Activated CD8-positive, alpha-beta T cell treated with anti-CD3 and anti-CD28 coated beads for 36 hours (primary cell): ENCODE measurements at regions of chr11 and their contacts with region 1.

Region 1: DNA sequence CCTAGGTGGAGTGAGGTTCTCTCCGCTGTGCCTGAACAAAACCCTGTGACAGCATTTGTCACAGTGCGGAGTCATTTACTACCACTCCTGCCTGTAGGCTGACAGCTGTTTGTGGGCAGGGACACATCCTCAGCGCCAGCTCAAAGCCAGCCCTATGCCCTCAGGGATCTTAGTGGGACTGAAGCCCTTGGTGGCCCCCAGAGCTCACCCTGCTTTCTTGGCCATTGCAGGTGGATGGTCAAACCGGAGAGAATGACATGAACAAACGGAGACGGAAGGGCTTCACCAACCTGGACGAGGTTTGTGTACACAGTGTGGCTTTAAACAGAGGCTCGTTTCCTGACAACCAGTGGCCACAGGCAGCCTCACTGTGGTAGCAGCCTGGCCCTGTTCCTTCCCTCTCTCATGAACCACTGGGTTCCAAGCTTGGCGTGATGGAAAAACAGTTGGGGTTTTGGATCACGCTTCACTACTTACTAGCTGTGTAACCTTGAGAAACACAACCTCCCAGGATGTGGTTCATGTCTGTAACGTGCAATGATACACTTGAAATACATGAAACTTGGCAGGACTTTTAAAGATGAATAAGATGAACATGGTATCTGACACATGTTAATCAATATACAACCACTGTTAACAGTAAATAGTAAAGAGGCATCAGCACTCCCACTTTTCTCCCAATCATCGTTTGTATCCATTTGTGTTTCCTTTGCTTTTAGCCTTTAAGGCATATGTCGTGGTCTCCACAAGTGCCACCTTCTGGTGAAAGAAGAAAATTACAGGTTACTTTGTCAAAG is 125.8 kb downstream of the MICAL2 start:
- DNase-seq: peak; percentile 86
- ATAC-seq: peak; percentile 86
- H3K4me3 Mint-ChIP-seq: peak overlapping the region; percentile 36
- H3K27ac Mint-ChIP-seq: peak overlapping the region; percentile 92
- H3K4me1 Mint-ChIP-seq: peaks cover 30% of the 10 kb centered on the region
- H3K27me3 Mint-ChIP-seq: no peaks in the 10 kb centered on the region
- CTCF ChIP-seq: peak; percentile 91

Region 2: DNA sequence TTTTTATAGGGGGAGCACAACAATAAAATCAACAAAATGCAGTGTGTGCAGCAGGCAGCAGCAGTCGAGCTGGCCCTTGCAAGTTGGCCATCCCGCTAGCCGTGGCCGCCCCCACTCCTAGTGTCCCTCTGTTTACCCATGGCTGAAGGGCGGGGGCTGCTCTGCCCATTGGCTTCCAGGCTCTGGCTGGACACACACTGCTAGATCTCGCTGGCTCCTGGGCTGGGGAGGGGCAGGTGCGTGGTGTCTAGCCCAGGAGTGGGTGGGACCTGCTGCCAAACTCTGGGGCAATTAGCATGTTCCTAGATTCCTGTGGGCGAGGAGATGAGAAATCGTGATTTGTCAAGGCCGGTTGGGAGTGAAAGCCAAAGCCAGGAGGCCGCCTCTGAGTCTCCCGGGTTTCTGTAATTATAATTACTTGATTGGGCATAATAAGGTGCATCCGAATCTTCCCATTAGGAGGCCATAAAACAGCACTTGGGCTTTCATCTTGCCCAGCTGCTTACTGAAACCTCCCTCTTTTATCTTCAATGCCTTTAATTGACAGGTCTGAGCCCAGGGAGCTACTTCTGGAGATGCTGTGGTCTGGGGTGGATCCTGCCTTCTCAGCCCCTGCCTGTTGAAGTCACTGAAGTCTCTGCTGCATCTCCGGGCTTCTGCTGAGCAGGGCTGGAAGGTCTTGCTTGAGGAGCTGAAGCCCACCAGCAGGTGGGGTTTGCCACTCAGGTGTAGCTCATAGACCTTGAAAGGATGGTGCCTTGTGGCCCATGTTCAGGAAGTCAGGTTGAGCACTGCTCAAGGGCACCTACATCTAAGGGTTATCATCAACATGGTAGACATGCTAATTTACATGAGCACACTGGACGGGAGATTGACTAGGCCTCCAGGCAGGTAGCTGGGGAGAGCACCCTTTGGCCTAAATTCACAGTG is 183.2 kb before region 1 on chr11:
- CTCF ChIA-PET with region 1: interaction called, 51 read pairs
- POLR2A ChIA-PET with region 1: no interaction called
- intact Hi-C with region 1: loop called (anchors 5 kb)
- DNase-seq: peak; percentile 58
- ATAC-seq: peak; percentile 71
- H3K4me3 Mint-ChIP-seq: no peak overlapping the region
- H3K27ac Mint-ChIP-seq: no peak overlapping the region
- H3K4me1 Mint-ChIP-seq: no peaks in the 10 kb centered on the region
- H3K27me3 Mint-ChIP-seq: no peaks in the 10 kb centered on the region
- CTCF ChIP-seq: no peak

Region 3: GRCh38 chr11:12102588-12103410 is 133.3 kb before region 1 on chr11:
- CTCF ChIA-PET with region 1: interaction called, 13 read pairs
- POLR2A ChIA-PET with region 1: no interaction called
- intact Hi-C with region 1: no loop called
- DNase-seq: no peak
- ATAC-seq: no peak
- H3K4me3 Mint-ChIP-seq: no peak overlapping the region
- H3K27ac Mint-ChIP-seq: no peak overlapping the region
- H3K4me1 Mint-ChIP-seq: peaks cover 6% of the 10 kb centered on the region
- H3K27me3 Mint-ChIP-seq: no peaks in the 10 kb centered on the region
- CTCF ChIP-seq: no peak

Region 4: DNA sequence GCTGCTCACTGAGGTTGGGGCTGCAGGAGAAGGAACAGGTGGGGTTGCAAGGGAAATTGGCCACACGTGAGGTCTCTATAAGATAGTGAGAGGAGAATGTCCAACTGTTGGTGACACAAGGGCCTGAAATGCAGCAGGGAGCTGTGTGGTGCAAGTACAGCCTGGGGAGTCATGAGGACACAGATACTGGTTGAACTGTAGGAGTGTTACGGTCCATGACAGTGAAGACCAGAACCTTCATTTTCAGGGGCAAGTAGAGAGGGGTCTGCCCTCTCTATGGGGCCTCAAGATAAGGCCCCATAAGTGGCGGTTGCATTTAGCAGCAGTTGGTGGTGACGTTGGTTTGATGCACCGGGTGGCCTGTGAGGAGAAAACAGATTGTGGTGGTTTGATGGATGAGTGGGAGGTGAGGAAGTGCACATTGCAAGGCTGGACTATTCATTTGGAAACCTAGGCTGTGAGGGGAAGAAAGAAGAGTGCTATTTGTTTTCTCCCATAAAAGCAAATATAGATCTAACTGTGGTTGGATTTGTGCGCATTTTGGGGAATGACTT is 86.4 kb before region 1 on chr11:
- CTCF ChIA-PET with region 1: interaction called, 11 read pairs
- POLR2A ChIA-PET with region 1: interaction called, 8 read pairs
- intact Hi-C with region 1: loop called (anchors 5 kb)
- DNase-seq: peak; percentile 85
- ATAC-seq: peak; percentile 56
- H3K4me3 Mint-ChIP-seq: peak overlapping the region; percentile 9
- H3K27ac Mint-ChIP-seq: peak overlapping the region; percentile 94
- H3K4me1 Mint-ChIP-seq: peaks cover 60% of the 10 kb centered on the region
- H3K27me3 Mint-ChIP-seq: no peaks in the 10 kb centered on the region
- CTCF ChIP-seq: no peak

Region 5: DNA sequence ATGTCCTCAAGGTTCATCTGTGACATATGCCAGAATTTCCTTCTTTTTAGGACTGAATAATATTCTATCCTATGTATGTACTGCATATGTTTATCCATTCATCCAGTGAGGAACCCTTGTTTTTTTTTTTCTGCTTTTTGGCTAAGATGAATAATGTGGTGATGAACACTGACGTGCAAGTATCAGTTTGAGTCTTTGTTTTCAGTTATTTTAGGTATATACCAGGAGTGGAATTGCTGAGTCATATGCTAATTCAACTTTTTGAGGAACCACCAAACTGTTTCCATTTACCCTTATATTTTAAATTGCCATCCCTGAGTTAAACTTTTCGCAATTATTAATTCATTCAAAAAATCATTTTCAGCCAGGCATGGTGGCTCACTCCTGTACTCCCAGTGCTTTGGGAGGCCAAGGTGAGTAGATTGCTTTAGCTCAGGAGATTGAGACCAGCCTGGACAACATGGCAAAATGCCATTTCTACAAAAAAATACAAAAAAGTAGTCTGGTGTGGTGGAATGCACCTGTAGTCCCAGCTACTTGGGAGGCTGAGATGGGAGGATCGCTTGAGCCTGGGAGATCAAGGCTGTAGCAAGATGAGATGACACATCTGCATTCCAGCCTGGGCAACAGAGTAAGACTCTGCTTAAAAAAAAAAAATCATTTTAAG is 61.5 kb before region 1 on chr11:
- CTCF ChIA-PET with region 1: interaction called, 3 read pairs
- POLR2A ChIA-PET with region 1: interaction called, 6 read pairs
- intact Hi-C with region 1: loop called (anchors 5 kb)
- DNase-seq: peak; percentile 26
- ATAC-seq: peak; percentile 64
- H3K4me3 Mint-ChIP-seq: peak overlapping the region; percentile 54
- H3K27ac Mint-ChIP-seq: peak overlapping the region; percentile 99
- H3K4me1 Mint-ChIP-seq: peaks cover 68% of the 10 kb centered on the region
- H3K27me3 Mint-ChIP-seq: no peaks in the 10 kb centered on the region
- CTCF ChIP-seq: no peak

Region 6: GRCh38 chr11:12224537-12224893 is 11.6 kb before region 1 on chr11:
- CTCF ChIA-PET with region 1: interaction called, 36 read pairs
- POLR2A ChIA-PET with region 1: interaction called, 39 read pairs
- intact Hi-C with region 1: no loop called
- DNase-seq: peak; percentile 99
- ATAC-seq: peak; percentile 96
- H3K4me3 Mint-ChIP-seq: peak overlapping the region; percentile 68
- H3K27ac Mint-ChIP-seq: peak overlapping the region; percentile 94
- H3K4me1 Mint-ChIP-seq: peaks cover 46% of the 10 kb centered on the region
- H3K27me3 Mint-ChIP-seq: no peaks in the 10 kb centered on the region
- CTCF ChIP-seq: no peak